Endothelial cell of umbilical vein (primary cell): ENCODE measurements at regions of chr1 and their contacts with region 1.

Region 1: DNA sequence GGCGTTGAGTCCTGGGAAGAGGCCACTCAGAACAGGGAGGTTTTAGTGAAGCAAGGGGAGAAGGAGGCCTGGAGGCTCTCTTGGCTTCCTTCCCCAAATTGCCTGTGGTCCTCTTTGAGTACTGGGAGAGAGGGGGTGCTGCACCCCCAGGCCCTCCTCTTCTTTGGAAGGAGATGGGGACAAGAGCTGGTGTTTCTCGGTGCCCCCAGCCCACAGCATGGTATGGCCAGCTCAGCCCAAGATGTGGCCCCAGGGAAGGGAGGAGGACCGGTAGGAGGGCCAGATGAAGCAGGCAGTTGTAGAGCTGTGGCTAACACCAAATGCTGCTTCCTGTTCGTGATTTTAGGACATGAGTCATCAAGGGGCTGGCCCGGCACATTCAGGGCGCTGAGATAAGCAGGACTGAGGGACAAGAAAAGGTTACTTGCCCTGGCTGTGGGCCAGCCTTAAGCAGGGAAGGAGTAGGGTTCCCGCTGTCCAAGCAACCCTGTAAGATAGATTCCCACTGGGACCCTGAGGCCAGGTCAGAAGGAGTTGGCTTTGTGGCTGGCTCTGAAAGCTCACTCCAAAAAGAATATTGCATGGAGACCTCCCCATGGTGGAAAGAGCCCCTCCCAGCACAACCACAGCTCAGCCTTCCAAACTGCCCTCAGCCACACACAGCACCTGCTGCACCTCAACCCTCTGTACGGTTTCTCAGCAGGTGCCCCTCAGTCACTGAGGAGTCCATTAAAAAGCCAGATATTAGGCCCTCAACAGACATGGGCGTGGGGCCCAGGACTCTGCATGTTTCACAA is 4.9 kb upstream of the TNFRSF1B start:
- DNase-seq: peak; percentile 96
- H3K4me3 ChIP-seq: no peak overlapping the region
- H3K27ac ChIP-seq: peak overlapping the region; percentile 59
- H3K4me1 ChIP-seq: peaks cover 23% of the 10 kb centered on the region
- H3K27me3 ChIP-seq: no peaks in the 10 kb centered on the region
- CTCF ChIP-seq: no peak
- POLR2A ChIP-seq: no peak

Region 2: GRCh38 chr1:12132092-12132491 is 29.8 kb before region 1 on chr1:
- CTCF ChIA-PET with region 1: interaction called, 3 read pairs
- POLR2A ChIA-PET with region 1: interaction called, 5 read pairs
- dilution Hi-C with region 1: no loop called
- intact Hi-C with region 1: loop called (anchors 1 kb)
- DNase-seq: no peak
- H3K4me3 ChIP-seq: no peak overlapping the region
- H3K27ac ChIP-seq: no peak overlapping the region
- H3K4me1 ChIP-seq: peaks cover 8% of the 10 kb centered on the region
- H3K27me3 ChIP-seq: no peaks in the 10 kb centered on the region
- CTCF ChIP-seq: no peak
- POLR2A ChIP-seq: no peak

Region 3: GRCh38 chr1:12147201-12147701 is 14.6 kb before region 1 on chr1:
- CTCF ChIA-PET with region 1: interaction called, 12 read pairs
- POLR2A ChIA-PET with region 1: no interaction called
- dilution Hi-C with region 1: no loop called
- intact Hi-C with region 1: loop called (anchors 1 kb)
- DNase-seq: peak; percentile 93
- H3K4me3 ChIP-seq: no peak overlapping the region
- H3K27ac ChIP-seq: peak overlapping the region; percentile 75
- H3K4me1 ChIP-seq: peaks cover 29% of the 10 kb centered on the region
- H3K27me3 ChIP-seq: no peaks in the 10 kb centered on the region
- CTCF ChIP-seq: no peak
- POLR2A ChIP-seq: no peak

Region 4: DNA sequence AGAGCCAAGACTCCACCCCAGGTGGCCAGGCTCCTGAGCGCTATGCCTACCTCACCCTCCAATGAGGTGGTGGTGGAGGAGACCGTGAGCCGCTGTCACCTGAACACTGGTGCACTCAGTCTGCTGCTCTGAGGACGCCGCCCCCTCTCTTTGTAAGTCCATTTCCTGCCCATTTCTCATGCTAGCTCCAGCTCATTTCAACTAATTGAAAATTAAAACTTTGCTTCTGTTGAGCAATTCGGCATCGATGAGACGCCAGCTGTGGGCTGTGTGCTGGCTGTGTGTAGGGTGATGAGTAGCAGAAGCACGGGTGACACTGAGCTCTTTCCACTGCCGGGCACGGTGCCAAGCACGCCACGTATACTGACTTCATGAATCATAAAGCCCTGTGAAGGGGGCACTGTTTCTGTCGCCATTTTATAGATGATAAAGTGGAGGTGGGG is 16.2 kb after region 1 on chr1:
- CTCF ChIA-PET with region 1: interaction called, 9 read pairs
- POLR2A ChIA-PET with region 1: no interaction called
- dilution Hi-C with region 1: no loop called
- intact Hi-C with region 1: loop called (anchors 2 kb)
- DNase-seq: peak; percentile 85
- H3K4me3 ChIP-seq: no peak overlapping the region
- H3K27ac ChIP-seq: peak overlapping the region; percentile 95
- H3K4me1 ChIP-seq: peaks cover 43% of the 10 kb centered on the region
- H3K27me3 ChIP-seq: no peaks in the 10 kb centered on the region
- CTCF ChIP-seq: no peak
- POLR2A ChIP-seq: no peak

Region 5: GRCh38 chr1:12184008-12184681 is 22.3 kb after region 1 on chr1:
- CTCF ChIA-PET with region 1: interaction called, 9 read pairs
- POLR2A ChIA-PET with region 1: no interaction called
- dilution Hi-C with region 1: no loop called
- intact Hi-C with region 1: loop called (anchors 1 kb)
- DNase-seq: peak; percentile 93
- H3K4me3 ChIP-seq: no peak overlapping the region
- H3K27ac ChIP-seq: peak overlapping the region; percentile 90
- H3K4me1 ChIP-seq: peaks cover 31% of the 10 kb centered on the region
- H3K27me3 ChIP-seq: no peaks in the 10 kb centered on the region
- CTCF ChIP-seq: peak; percentile 42 to 55
- POLR2A ChIP-seq: no peak